Gastrocnemius medialis (tissue), 4 donors: ENCODE measurements at regions of chr16 and their contacts with region 1.

Region 1: DNA sequence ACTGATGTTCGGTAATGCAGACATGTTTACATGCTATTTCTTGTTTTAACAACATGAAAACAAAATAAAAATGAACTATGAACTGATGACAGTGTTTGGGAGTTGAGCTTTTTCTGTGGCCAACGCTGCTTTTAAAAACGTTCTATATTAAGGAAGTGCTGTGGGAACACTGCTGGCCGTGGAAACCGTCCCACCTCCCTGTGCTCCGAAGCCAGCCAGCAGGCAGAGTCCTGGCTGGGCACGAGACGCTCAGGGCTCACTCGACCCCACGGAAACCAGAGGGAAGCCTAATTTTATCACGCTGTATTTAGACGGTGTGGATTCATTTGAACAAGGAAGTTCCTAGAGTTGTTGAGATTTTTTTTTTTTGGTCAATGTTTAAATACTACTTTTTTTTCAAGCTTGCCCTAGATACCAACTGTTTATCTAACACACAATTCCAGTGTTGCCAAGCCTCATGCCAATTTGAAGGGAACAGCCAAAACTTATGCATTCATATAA is 25.8 kb downstream of the ADCY9 start:
- DNase-seq: peak; percentile 66 to 74
- ATAC-seq: peak; percentile 8 to 9
- H3K4me3 ChIP-seq: peak overlapping the region; percentile 2 to 15 (median 6)
- H3K27ac ChIP-seq: peak overlapping the region; percentile 90 to 95 (median 94)
- H3K4me1 ChIP-seq: peaks cover 88% of the 10 kb centered on the region in 2 donors
- H3K27me3 ChIP-seq: no peaks in the 10 kb centered on the region
- CTCF ChIP-seq: no peak
- POLR2A ChIP-seq: peak in 1 of 2 donors; percentile 38

Region 2: DNA sequence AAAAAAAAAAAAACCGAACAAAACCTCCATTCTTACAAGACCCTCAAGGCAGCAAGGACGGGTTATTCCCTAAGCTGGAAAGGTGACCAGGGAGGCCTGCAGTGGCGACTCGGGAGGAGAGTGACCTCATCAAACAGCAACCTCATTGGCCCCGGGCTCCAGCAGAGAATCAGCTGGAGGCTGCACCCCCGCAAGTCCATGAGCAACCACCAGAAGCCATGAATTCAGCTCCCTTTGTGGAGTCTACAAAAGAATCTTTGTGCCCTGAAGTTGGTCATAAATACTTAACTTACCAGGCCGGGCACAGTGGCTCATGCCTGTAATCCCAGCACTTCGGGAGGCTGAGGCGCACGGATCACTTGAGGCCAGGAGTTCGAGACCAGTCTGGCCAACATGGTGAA is 129.0 kb before region 1 on chr16:
- in situ Hi-C with region 1: no loop called
- intact Hi-C with region 1: no loop called
- DNase-seq: no peak
- ATAC-seq: peak in 1 of 2 donors; percentile 31
- H3K4me3 ChIP-seq: peak overlapping the region; percentile 59 to 72 (median 61)
- H3K27ac ChIP-seq: peak overlapping the region; percentile 41 to 76 (median 72)
- H3K4me1 ChIP-seq: peaks cover 18 to 28% of the 10 kb centered on the region in 2 donors
- H3K27me3 ChIP-seq: no peaks in the 10 kb centered on the region
- CTCF ChIP-seq: no peak
- POLR2A ChIP-seq: no peak

Region 3: DNA sequence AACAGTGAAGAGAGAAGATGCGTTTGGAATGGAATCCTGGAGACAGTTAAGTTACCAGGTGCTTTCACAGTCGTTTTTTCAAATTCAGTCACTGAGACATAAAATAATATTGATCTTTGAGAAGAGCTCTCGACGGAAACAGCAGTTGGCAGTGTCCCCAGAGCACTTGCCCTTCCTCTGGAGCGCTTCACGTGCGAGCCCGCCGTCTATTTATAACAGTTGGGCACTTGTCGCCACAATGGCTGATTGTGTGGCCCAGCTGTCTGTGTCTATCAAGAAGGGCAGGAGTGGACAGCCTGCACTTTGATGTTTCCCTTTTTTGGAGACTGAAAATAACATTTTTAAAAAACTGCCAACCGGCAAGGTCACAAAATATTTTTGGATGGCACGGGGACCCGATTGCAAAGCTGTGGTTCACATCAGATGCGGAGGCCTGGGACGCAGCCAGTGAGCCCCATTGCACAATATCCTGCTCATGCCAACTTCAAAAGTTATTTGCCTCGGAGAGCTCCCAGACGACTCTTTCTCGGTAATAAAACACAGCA is 37.0 kb before region 1 on chr16:
- in situ Hi-C with region 1: no loop called
- intact Hi-C with region 1: loop called (anchors 1 kb)
- DNase-seq: peak; percentile 94 to 97
- ATAC-seq: peak; percentile 85 to 88
- H3K4me3 ChIP-seq: peak overlapping the region; percentile 8 to 47 (median 42)
- H3K27ac ChIP-seq: peak overlapping the region; percentile 87 to 98 (median 90)
- H3K4me1 ChIP-seq: peaks cover 37 to 52% of the 10 kb centered on the region in 2 donors
- H3K27me3 ChIP-seq: no peaks in the 10 kb centered on the region
- CTCF ChIP-seq: no peak
- POLR2A ChIP-seq: peak in 1 of 2 donors; percentile 48

Region 4: GRCh38 chr16:4136229-4136813 is 45.9 kb after region 1 on chr16:
- in situ Hi-C with region 1: no loop called
- intact Hi-C with region 1: no loop called
- DNase-seq: no peak
- ATAC-seq: peak in 1 of 2 donors; percentile 24
- H3K4me3 ChIP-seq: no peak overlapping the region
- H3K27ac ChIP-seq: no peak overlapping the region
- H3K4me1 ChIP-seq: no peaks in the 10 kb centered on the region
- H3K27me3 ChIP-seq: no peaks in the 10 kb centered on the region
- CTCF ChIP-seq: no peak
- POLR2A ChIP-seq: no peak

Region 5: DNA sequence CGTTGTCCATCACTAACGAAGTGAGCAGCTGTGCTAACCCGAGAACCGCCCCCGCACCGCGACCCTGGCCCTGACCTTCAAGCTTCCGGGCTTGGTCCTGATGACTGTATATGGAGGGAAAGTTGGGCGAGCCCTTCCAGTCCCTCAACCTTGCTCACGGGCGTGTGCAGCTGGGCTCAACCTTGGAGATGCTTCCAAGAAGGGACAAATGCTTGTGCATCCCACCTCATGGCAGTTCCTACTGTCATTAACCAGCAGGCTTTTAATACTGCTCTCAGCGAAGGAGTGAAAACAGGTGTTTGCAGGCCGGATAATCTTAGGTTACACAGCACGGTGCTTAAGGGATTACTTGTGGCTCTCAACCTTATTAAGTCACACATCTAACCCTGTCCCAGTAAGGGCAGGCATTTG is 117.9 kb after region 1 on chr16:
- in situ Hi-C with region 1: no loop called
- intact Hi-C with region 1: loop called (anchors 5 kb)
- DNase-seq: peak; percentile 47 to 73
- ATAC-seq: peak; percentile 37 to 40
- H3K4me3 ChIP-seq: peak overlapping the region in 3 of 4 donors; percentile 23 to 32 (median 30)
- H3K27ac ChIP-seq: peak overlapping the region; percentile 91 to 100 (median 98)
- H3K4me1 ChIP-seq: peaks cover 77 to 80% of the 10 kb centered on the region in 2 donors
- H3K27me3 ChIP-seq: no peaks in the 10 kb centered on the region
- CTCF ChIP-seq: no peak
- POLR2A ChIP-seq: peak; percentile 13 to 59

Region 6: DNA sequence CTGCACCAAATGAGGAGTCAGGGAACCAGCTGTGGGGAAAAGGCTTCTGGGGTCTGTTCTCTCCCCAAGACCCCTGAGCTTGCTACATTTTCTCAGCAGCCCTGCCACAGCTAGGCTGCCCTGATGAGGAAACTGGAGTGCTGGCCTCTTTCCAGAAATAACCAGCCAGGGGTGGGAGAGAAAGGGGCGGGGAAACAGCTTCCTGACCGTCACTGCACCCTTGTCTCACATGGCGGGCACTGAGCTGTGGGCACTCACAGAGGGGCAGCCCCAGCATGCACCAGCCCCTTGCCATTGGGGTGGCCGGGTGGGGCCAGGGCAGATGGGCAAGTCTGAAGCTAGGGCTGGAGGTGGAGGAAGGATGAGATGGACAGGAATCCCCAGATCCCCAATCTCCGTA is 148.6 kb after region 1 on chr16:
- in situ Hi-C with region 1: no loop called
- intact Hi-C with region 1: loop called (anchors 5 kb)
- DNase-seq: peak in 1 of 2 donors; percentile 59
- ATAC-seq: no peak
- H3K4me3 ChIP-seq: peak overlapping the region; percentile 59 to 68 (median 60)
- H3K27ac ChIP-seq: peak overlapping the region; percentile 89 to 99 (median 98)
- H3K4me1 ChIP-seq: peaks cover 46 to 66% of the 10 kb centered on the region in 2 donors
- H3K27me3 ChIP-seq: no peaks in the 10 kb centered on the region
- CTCF ChIP-seq: no peak
- POLR2A ChIP-seq: no peak